ENCODE measurements at regions of chr17 and their contacts with region 1.

Region 1: GRCh38 chr17:28967221-28968140 is 16.2 kb upstream of the PHF12 start:
- DNase-seq: no peak
- H3K4me3 ChIP-seq: no peak overlapping the region
- CTCF ChIP-seq: no peak

Region 2: GRCh38 chr17:29084541-29085146 is 117.2 kb after region 1 on chr17:
- CTCF ChIA-PET with region 1: interaction called, 56 read pairs
- POLR2A ChIA-PET with region 1: no interaction called
- DNase-seq: no peak
- H3K4me3 ChIP-seq: no peak overlapping the region
- CTCF ChIP-seq: no peak

Region 3: GRCh38 chr17:29133146-29133713 is 165.7 kb after region 1 on chr17:
- CTCF ChIA-PET with region 1: interaction called, 25 read pairs
- POLR2A ChIA-PET with region 1: interaction called, 3 read pairs
- DNase-seq: no peak
- H3K4me3 ChIP-seq: no peak overlapping the region
- CTCF ChIP-seq: no peak

Region 4: GRCh38 chr17:29162738-29163341 is 195.4 kb after region 1 on chr17:
- CTCF ChIA-PET with region 1: no interaction called
- POLR2A ChIA-PET with region 1: no interaction called
- DNase-seq: no peak
- H3K4me3 ChIP-seq: no peak overlapping the region
- CTCF ChIP-seq: no peak

Region 5: GRCh38 chr17:29389982-29390850 is 422.7 kb after region 1 on chr17 and contains the start of gene TAOK1:
- CTCF ChIA-PET with region 1: no interaction called
- POLR2A ChIA-PET with region 1: no interaction called
- DNase-seq: peak; percentile 84
- H3K4me3 ChIP-seq: peak within 1 kb of the TSS; percentile 88
- CTCF ChIP-seq: no peak